ENCODE measurements at regions of chr3 and their contacts with region 1.

Region 1: GRCh38 chr3:50714946-50715345 is 40.2 kb downstream of the DOCK3 start:
- DNase-seq: no peak
- H3K4me3 Mint-ChIP-seq: no peak overlapping the region
- H3K27ac Mint-ChIP-seq: no peak overlapping the region
- H3K4me1 Mint-ChIP-seq: no peaks in the 10 kb centered on the region
- H3K27me3 Mint-ChIP-seq: peaks cover 10% of the 10 kb centered on the region
- CTCF ChIP-seq: no peak

Region 2: GRCh38 chr3:49616491-49616941 is 1098.4 kb before region 1 on chr3:
- CTCF ChIA-PET with region 1: no interaction called
- intact Hi-C with region 1: no loop called
- DNase-seq: no peak
- H3K4me3 Mint-ChIP-seq: no peak overlapping the region
- H3K27ac Mint-ChIP-seq: no peak overlapping the region
- H3K4me1 Mint-ChIP-seq: no peaks in the 10 kb centered on the region
- H3K27me3 Mint-ChIP-seq: peaks cover 44% of the 10 kb centered on the region
- CTCF ChIP-seq: no peak

Region 3: GRCh38 chr3:50365080-50365841 is 349.7 kb before region 1 on chr3:
- CTCF ChIA-PET with region 1: no interaction called
- intact Hi-C with region 1: no loop called
- DNase-seq: peak; percentile 87
- H3K4me3 Mint-ChIP-seq: peak overlapping the region; percentile 64
- H3K27ac Mint-ChIP-seq: no peak overlapping the region
- H3K4me1 Mint-ChIP-seq: no peaks in the 10 kb centered on the region
- H3K27me3 Mint-ChIP-seq: peaks cover 39% of the 10 kb centered on the region
- CTCF ChIP-seq: no peak

Region 4: DNA sequence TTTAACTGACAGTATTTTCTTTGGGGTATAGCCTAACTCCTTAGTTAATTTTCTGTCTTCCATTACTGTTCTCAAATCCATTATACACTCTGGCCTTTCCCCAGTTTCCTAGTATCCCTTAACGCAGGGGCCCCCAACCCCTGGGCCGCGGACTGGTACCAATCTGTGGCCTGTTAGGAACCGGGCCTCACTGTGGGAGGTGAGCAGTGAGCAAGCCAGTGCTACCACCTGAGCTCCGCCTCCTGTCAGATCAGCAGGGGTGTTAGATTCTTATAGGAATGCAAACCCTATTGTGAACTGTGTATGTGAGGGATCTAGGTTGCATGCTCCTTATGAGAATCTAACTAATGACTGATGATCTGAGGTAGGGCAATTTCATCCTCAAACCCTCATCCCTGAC is 34.9 kb after region 1 on chr3:
- CTCF ChIA-PET with region 1: interaction called, 3 read pairs
- intact Hi-C with region 1: loop called (anchors 1 kb)
- DNase-seq: no peak
- H3K4me3 Mint-ChIP-seq: no peak overlapping the region
- H3K27ac Mint-ChIP-seq: no peak overlapping the region
- H3K4me1 Mint-ChIP-seq: no peaks in the 10 kb centered on the region
- H3K27me3 Mint-ChIP-seq: peaks cover 12% of the 10 kb centered on the region
- CTCF ChIP-seq: no peak